ENCODE measurements at regions of chr1 and their contacts with region 1.

Region 1: GRCh38 chr1:173420330-173420806 is 56.8 kb upstream of the PRDX6 start:
- DNase-seq: peak; percentile 64 to 72 (median 65)
- H3K4me3 ChIP-seq: no peak overlapping the region
- H3K4me3 Mint-ChIP-seq: peak overlapping the region in 1 of 8 donors; percentile 61
- H3K27ac ChIP-seq: no peak overlapping the region
- H3K27ac Mint-ChIP-seq: peak overlapping the region in 4 of 7 donors; percentile 2 to 77 (median 42)
- H3K4me1 ChIP-seq: peaks cover 7% of the 10 kb centered on the region
- H3K4me1 Mint-ChIP-seq: peaks cover 3 to 7% (median 6%) of the 10 kb centered on the region in 4 donors
- H3K27me3 ChIP-seq: no peaks in the 10 kb centered on the region
- H3K27me3 Mint-ChIP-seq: no peaks in the 10 kb centered on the region

Region 2: DNA sequence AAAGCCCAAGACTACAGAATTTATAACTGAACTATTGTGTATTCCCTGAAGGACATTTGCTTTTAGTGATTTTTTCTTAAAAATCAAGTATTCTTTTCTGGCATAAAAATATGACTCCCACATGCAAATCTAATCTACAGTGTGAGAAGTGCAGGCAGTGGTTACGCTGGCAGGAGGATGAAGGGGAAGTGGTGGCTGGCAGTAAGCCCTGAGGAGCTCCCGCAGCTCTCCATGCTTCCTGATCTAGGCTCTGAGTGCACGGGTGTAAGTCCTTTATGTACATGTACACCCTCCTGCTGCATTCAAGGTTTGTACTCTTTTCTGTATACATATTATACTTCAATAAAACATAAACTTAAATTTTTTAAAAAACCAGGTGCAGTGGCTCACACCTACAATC is 10.8 kb before region 1 on chr1:
- CTCF ChIA-PET with region 1: interaction called, 13 read pairs
- POLR2A ChIA-PET with region 1: no interaction called
- intact Hi-C with region 1: no loop called
- DNase-seq: peak in 2 of 5 donors; percentile 14 to 15
- H3K4me3 ChIP-seq: no peak overlapping the region
- H3K4me3 Mint-ChIP-seq: peak overlapping the region in 2 of 8 donors; percentile 26 to 61
- H3K27ac ChIP-seq: no peak overlapping the region
- H3K27ac Mint-ChIP-seq: peak overlapping the region in 5 of 7 donors; percentile 19 to 80 (median 32)
- H3K4me1 ChIP-seq: peaks cover 29% of the 10 kb centered on the region
- H3K4me1 Mint-ChIP-seq: peaks cover 20 to 33% (median 26%) of the 10 kb centered on the region in 4 donors
- H3K27me3 ChIP-seq: no peaks in the 10 kb centered on the region
- H3K27me3 Mint-ChIP-seq: no peaks in the 10 kb centered on the region

Region 3: DNA sequence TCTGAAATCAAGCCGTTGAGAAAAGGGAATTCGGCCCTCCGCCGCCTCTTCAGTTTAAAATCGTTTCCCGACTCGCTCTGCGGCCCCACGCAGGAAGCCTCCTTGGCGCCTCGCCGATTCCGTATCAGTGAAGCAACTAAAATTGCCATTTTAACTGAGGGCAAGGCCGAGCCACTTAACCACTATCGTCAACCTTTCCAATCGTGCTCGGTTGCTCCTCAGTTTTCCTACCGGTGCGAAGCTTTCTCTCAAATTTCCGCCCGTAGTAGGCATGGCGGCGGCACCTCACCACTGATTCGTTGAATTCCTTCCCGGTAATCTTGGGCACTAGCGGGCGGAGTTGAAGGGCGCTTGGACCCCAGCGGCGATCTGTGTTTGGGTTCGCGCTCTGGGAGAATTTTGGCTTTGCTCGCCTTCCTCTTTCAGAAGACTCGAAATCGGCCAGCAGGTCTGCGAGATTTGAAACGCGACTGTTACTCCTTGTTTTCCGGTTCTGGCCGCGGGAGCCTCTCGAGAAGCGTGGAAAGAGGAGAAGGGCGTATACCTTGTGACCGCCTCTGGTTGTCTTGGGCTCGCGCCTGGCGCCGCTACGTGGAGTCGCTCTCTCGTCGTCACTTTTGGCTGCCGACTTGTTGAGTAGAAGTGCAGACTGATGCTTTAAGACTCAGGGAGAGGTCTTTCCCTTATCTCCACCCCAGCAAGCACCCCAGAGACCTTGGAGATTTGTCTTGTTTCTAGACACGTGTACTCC is 404.1 kb after region 1 on chr1 and contains the starts of genes CENPL and DARS2:
- CTCF ChIA-PET with region 1: interaction called, 25 read pairs
- POLR2A ChIA-PET with region 1: interaction called, 3 read pairs
- intact Hi-C with region 1: loop called (anchors 1 kb)
- DNase-seq: peak; percentile 92 to 96 (median 93)
- H3K4me3 ChIP-seq: peak within 1 kb of the TSS; percentile 93 to 95
- H3K4me3 Mint-ChIP-seq: peak within 1 kb of the TSS; percentile 93 to 99 (median 97)
- H3K27ac ChIP-seq: peak within 1 kb of the TSS; percentile 79
- H3K27ac Mint-ChIP-seq: peak within 1 kb of the TSS; percentile 97 to 99 (median 97)
- H3K4me1 ChIP-seq: peaks cover 18% of the 10 kb centered on the region
- H3K4me1 Mint-ChIP-seq: peaks cover 27 to 46% (median 33%) of the 10 kb centered on the region in 4 donors
- H3K27me3 ChIP-seq: no peaks in the 10 kb centered on the region
- H3K27me3 Mint-ChIP-seq: no peaks in the 10 kb centered on the region
- total RNA-seq, gene CENPL: 9.0 to 10.2 TPM
- total RNA-seq, gene DARS2: 13.4 to 13.5 TPM

Region 4: DNA sequence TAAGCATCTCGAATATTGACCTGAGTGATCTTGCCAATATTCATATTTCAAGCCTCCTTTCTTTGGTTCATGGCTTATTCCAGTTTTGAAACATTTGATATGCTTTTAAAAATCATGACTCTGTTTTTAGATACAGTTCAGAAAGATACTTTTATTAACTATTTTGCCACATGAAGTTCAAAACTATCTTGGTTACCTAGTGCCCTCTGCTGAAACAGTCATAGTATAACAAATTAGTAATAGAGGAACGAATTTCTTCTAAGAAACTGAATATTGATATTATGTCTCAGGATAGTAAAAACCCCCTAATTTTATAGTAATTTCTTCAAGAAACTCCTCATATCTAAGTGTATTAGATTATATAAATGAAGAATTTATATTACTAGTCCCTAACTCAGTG is 654.4 kb after region 1 on chr1:
- CTCF ChIA-PET with region 1: no interaction called
- POLR2A ChIA-PET with region 1: no interaction called
- intact Hi-C with region 1: loop called (anchors 5 kb)
- DNase-seq: peak in 2 of 5 donors; percentile 6 to 14
- H3K4me3 ChIP-seq: no peak overlapping the region
- H3K4me3 Mint-ChIP-seq: no peak overlapping the region
- H3K27ac ChIP-seq: no peak overlapping the region
- H3K27ac Mint-ChIP-seq: no peak overlapping the region
- H3K4me1 ChIP-seq: no peaks in the 10 kb centered on the region
- H3K4me1 Mint-ChIP-seq: no peaks in the 10 kb centered on the region
- H3K27me3 ChIP-seq: no peaks in the 10 kb centered on the region
- H3K27me3 Mint-ChIP-seq: peaks cover 0 to 4% of the 10 kb centered on the region in 2 donors

Region 5: DNA sequence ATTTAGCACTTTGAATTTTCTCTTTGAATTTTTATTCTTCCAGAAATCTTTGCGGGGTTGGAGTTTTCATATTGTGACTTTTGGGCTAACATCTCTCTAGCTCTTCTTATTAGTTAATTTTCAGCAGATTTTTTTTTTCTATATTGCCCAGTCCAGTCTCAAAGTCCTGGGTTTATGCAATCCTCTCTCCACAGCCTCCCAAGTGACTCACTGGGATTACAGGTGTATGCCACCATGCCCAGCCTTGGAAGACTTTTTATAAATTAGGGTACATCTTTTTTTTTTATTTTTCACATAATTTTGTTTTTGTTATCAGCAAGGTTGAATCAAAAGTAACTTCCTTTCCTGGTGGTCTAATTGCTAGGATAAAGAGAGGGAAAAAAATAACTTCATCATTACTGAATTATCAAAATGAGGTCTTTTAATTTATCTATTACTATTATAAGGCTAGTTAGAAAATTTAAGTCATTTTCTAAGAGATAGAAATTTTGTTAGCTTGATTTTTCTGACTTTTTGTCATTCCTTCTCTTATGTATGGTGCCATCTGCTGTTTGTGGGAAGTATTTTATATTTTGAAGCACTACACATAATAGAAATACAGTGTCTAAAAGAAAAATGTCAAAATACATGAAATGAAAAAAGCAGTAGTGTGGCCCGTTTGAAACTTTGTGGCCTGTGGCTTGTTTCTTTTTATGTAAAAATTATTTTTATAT is 1306.0 kb after region 1 on chr1:
- CTCF ChIA-PET with region 1: no interaction called
- POLR2A ChIA-PET with region 1: no interaction called
- intact Hi-C with region 1: loop called (anchors 5 kb)
- DNase-seq: peak in 1 of 5 donors; percentile 3
- H3K4me3 ChIP-seq: no peak overlapping the region
- H3K4me3 Mint-ChIP-seq: no peak overlapping the region
- H3K27ac ChIP-seq: no peak overlapping the region
- H3K27ac Mint-ChIP-seq: peak overlapping the region in 1 of 7 donors; percentile 57
- H3K4me1 ChIP-seq: no peaks in the 10 kb centered on the region
- H3K4me1 Mint-ChIP-seq: peaks cover 0 to 5% (median 0%) of the 10 kb centered on the region in 4 donors
- H3K27me3 ChIP-seq: no peaks in the 10 kb centered on the region
- H3K27me3 Mint-ChIP-seq: no peaks in the 10 kb centered on the region

Region 6: GRCh38 chr1:174743654-174744561 is 1323.5 kb after region 1 on chr1:
- CTCF ChIA-PET with region 1: no interaction called
- POLR2A ChIA-PET with region 1: no interaction called
- intact Hi-C with region 1: loop called (anchors 1 kb)
- DNase-seq: peak in 4 of 5 donors; percentile 42 to 47 (median 44)
- H3K4me3 ChIP-seq: no peak overlapping the region
- H3K4me3 Mint-ChIP-seq: no peak overlapping the region
- H3K27ac ChIP-seq: no peak overlapping the region
- H3K27ac Mint-ChIP-seq: peak overlapping the region in 2 of 7 donors; percentile 60
- H3K4me1 ChIP-seq: no peaks in the 10 kb centered on the region
- H3K4me1 Mint-ChIP-seq: peaks cover 0 to 7% (median 0%) of the 10 kb centered on the region in 4 donors
- H3K27me3 ChIP-seq: no peaks in the 10 kb centered on the region
- H3K27me3 Mint-ChIP-seq: no peaks in the 10 kb centered on the region